ENCODE measurements at regions of chr9 and their contacts with region 1.

Region 1: GRCh38 chr9:18208154-18209059 is 265.5 kb upstream of the ADAMTSL1 start:
- DNase-seq: peak in 1 of 10 donors; percentile 52

Region 2: GRCh38 chr9:17810728-17811571 is 397.5 kb before region 1 on chr9:
- intact Hi-C with region 1: loop called (anchors 2 kb)
- DNase-seq: peak in 5 of 10 donors; percentile 24 to 65 (median 54)

Region 3: DNA sequence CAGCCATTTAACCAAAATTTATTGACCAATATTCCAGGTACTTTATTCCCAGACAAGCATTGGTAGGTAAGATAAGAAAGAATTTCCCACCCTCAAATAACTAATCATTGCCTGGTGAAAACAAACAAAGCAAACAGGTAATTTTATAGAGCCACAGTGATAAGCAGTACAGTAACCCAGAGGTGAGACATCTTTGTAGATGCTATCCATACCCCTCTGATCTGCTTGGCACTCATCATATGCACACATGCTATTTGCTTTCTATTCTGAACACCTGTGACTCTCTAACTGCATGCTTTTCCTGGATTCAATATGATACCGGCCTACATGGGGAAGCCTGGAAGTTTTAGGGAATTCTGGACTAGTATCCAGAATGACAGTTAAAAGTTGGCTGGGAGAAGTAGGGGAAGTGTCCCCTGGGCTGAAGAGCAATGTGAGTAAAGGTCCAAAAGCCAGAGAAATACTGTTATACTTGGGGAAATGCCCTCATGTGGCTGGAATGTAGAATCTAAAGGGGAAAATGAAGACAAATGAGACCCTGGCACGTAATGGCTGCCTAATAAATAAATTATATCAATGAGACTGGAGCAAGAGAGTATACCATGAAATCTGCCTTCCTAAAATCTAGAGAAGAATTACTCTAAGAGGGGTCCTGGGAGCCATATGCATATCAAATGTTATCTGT is 21.7 kb after region 1 on chr9:
- intact Hi-C with region 1: no loop called
- DNase-seq: no peak

Measured in posterior cingulate gyrus (tissue), 11 donors.